ENCODE measurements at regions of chr1 and their contacts with region 1.

Region 1: GRCh38 chr1:204363335-204364124 is 3.8 kb upstream of the PLEKHA6 start:
- DNase-seq: peak; percentile 91
- H3K4me3 Mint-ChIP-seq: peak overlapping the region; percentile 73
- H3K27ac Mint-ChIP-seq: peak overlapping the region; percentile 85
- H3K4me1 Mint-ChIP-seq: peaks cover 40% of the 10 kb centered on the region
- H3K27me3 Mint-ChIP-seq: peaks cover 5% of the 10 kb centered on the region

Region 2: GRCh38 chr1:203861379-203862184 is 501.9 kb before region 1 on chr1 and contains the start of gene SNRPE:
- intact Hi-C with region 1: loop called (anchors 1 kb)
- DNase-seq: peak; percentile 99
- H3K4me3 Mint-ChIP-seq: peak within 1 kb of the TSS; percentile 93
- H3K27ac Mint-ChIP-seq: peak within 1 kb of the TSS; percentile 98
- H3K4me1 Mint-ChIP-seq: peaks cover 20% of the 10 kb centered on the region
- H3K27me3 Mint-ChIP-seq: no peaks in the 10 kb centered on the region
- total RNA-seq, gene SNRPE: 292 and 302 TPM in 2 replicates

Region 3: DNA sequence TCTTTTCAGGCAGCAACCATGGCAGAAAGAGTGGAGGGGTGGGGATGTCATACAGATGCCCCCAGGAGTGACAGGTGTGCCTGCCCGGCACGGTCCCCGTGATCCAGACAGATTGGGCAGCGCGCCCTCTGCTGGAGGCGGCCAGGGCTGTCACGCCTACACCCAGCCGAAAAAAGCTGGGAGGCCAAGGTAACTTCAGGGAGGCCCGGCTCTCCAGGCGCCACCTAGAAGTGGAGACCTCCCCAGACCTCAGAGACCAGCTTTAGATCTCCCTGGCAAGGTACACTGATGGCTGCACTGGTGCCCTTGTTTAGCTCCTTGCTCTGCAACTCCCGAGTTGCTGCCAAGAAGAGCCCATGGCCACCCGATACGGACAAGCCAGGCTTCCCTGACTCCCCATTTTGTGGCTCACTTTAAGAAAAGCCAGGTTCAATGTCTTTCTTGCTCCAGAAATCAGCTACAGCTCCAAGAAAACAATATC is 156.4 kb before region 1 on chr1:
- intact Hi-C with region 1: loop called (anchors 1 kb)
- DNase-seq: peak; percentile 92
- H3K4me3 Mint-ChIP-seq: no peak overlapping the region
- H3K27ac Mint-ChIP-seq: no peak overlapping the region
- H3K4me1 Mint-ChIP-seq: no peaks in the 10 kb centered on the region
- H3K27me3 Mint-ChIP-seq: peaks cover 33% of the 10 kb centered on the region

Region 4: DNA sequence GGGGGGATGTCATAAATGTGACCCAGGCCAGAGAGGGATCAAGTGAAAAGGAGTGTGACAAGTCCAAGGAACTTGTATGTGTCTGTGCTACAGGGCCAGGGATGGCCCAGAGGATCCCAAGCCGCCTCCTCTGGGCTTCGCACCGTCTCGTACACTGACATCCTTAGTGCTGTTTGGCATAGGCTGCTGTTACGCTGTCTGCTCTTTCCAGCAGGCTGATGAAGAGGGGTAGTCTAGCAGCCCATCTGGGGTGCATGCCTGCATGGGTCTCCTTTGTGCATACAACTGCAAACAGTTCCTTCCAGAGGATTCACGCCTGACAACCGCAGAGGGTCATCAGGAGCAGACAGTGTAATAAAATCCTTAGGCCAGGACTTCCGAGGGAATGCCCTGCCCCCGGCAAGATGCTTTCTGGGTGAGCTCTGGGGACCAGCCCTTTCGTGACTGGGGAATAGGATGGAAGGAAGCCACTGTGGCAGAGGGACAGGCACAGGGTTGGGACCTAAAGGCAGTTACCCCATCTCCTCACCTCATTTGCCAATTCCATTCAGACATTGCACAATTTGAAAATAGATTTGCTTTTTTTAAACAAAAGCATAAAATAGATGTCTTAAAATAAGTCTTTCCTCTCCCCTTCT is 143.4 kb before region 1 on chr1:
- intact Hi-C with region 1: no loop called
- DNase-seq: no peak
- H3K4me3 Mint-ChIP-seq: no peak overlapping the region
- H3K27ac Mint-ChIP-seq: no peak overlapping the region
- H3K4me1 Mint-ChIP-seq: no peaks in the 10 kb centered on the region
- H3K27me3 Mint-ChIP-seq: peaks cover 2% of the 10 kb centered on the region

Region 5: GRCh38 chr1:204257954-204258752 is 105.4 kb before region 1 on chr1:
- intact Hi-C with region 1: loop called (anchors 1 kb)
- DNase-seq: peak; percentile 68
- H3K4me3 Mint-ChIP-seq: no peak overlapping the region
- H3K27ac Mint-ChIP-seq: no peak overlapping the region
- H3K4me1 Mint-ChIP-seq: peaks cover 3% of the 10 kb centered on the region
- H3K27me3 Mint-ChIP-seq: no peaks in the 10 kb centered on the region

Region 6: GRCh38 chr1:204323887-204324286 is 39.6 kb before region 1 on chr1:
- intact Hi-C with region 1: loop called (anchors 1 kb)
- DNase-seq: peak; percentile 64
- H3K4me3 Mint-ChIP-seq: peak overlapping the region; percentile 68
- H3K27ac Mint-ChIP-seq: peak overlapping the region; percentile 88
- H3K4me1 Mint-ChIP-seq: peaks cover 30% of the 10 kb centered on the region
- H3K27me3 Mint-ChIP-seq: no peaks in the 10 kb centered on the region

Region 7: DNA sequence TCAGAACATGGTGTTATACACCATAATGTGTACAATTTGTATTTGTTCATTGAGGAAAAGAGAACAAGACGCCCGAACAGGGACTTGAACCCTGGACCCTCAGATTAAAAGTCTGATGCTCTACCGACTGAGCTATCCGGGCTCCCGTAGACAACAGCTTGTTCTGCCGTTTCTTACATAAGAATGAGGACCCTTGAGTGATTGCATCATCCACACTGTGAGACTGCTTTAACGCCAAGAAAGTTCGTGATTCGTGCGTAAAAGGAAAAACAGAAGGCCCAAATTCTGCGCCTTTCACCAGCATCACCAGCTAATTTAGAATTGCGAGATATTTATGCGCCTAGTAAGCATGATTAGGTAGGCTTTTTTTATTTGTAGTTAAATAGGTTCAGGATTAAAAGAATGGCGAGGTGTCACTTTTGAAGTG is 143.4 kb after region 1 on chr1:
- intact Hi-C with region 1: loop called (anchors 5 kb)
- DNase-seq: peak; percentile 97
- H3K4me3 Mint-ChIP-seq: peak overlapping the region; percentile 94
- H3K27ac Mint-ChIP-seq: peak overlapping the region; percentile 99
- H3K4me1 Mint-ChIP-seq: peaks cover 27% of the 10 kb centered on the region
- H3K27me3 Mint-ChIP-seq: peaks cover 2% of the 10 kb centered on the region

Measured in activated CD4-positive, alpha-beta T cell treated with anti-CD3 and anti-CD28 coated beads, Interleukin-2, amount 10 ng/mL, durations not matched to agents 24 days and 14 days (primary cell).